Activated CD8-positive, alpha-beta T cell treated with anti-CD3 and anti-CD28 coated beads, Interleukin-2, amount 10 ng/mL, durations not matched to agents 7 days and 5 days (primary cell): ENCODE measurements at regions of chr5 and their contacts with region 1.

Region 1: DNA sequence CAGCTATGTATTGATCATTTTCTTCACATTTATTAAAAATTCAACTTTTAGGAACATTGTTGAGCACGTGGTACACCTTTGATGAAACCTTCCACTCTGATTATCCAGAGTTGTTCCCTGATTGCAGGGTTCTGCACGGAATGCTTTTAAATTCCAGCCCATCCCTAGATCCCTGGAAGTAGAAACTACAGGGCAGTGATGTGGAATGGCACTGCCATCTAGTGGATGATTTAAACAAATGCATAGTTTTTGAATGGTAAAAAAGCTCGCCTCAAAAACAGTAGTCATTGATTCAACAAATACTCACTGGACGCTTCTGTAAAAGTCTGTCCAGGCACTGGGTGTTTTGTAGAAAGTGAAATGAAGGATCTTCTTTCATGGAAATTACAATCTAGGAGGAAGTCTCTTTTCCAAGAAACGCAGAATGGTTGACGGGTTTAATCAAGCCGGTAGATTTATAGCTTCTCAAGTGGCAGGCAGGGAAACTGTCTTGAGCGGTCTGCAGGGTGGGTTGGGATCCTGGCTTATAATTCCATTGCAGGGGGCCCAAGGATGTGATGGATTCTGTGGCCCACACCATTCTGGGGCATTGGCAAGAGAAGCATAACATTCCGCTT is 118.4 kb downstream of the ARHGAP26 start:
- DNase-seq: peak; percentile 24
- ATAC-seq: no peak
- H3K4me3 Mint-ChIP-seq: no peak overlapping the region
- H3K27ac Mint-ChIP-seq: no peak overlapping the region
- H3K4me1 Mint-ChIP-seq: peaks cover 11% of the 10 kb centered on the region
- H3K27me3 Mint-ChIP-seq: no peaks in the 10 kb centered on the region

Region 2: GRCh38 chr5:142726188-142726731 is 162.3 kb before region 1 on chr5:
- CTCF ChIA-PET with region 1: interaction called, 468 read pairs
- POLR2A ChIA-PET with region 1: no interaction called
- DNase-seq: no peak
- ATAC-seq: no peak
- H3K4me3 Mint-ChIP-seq: no peak overlapping the region
- H3K27ac Mint-ChIP-seq: no peak overlapping the region
- H3K4me1 Mint-ChIP-seq: no peaks in the 10 kb centered on the region
- H3K27me3 Mint-ChIP-seq: peaks cover 2% of the 10 kb centered on the region

Region 3: GRCh38 chr5:142748568-142749249 is 139.9 kb before region 1 on chr5:
- CTCF ChIA-PET with region 1: interaction called, 445 read pairs
- POLR2A ChIA-PET with region 1: no interaction called
- DNase-seq: peak; percentile 62
- ATAC-seq: peak; percentile 65
- H3K4me3 Mint-ChIP-seq: no peak overlapping the region
- H3K27ac Mint-ChIP-seq: no peak overlapping the region
- H3K4me1 Mint-ChIP-seq: peaks cover 10% of the 10 kb centered on the region
- H3K27me3 Mint-ChIP-seq: peaks cover 4% of the 10 kb centered on the region

Region 4: DNA sequence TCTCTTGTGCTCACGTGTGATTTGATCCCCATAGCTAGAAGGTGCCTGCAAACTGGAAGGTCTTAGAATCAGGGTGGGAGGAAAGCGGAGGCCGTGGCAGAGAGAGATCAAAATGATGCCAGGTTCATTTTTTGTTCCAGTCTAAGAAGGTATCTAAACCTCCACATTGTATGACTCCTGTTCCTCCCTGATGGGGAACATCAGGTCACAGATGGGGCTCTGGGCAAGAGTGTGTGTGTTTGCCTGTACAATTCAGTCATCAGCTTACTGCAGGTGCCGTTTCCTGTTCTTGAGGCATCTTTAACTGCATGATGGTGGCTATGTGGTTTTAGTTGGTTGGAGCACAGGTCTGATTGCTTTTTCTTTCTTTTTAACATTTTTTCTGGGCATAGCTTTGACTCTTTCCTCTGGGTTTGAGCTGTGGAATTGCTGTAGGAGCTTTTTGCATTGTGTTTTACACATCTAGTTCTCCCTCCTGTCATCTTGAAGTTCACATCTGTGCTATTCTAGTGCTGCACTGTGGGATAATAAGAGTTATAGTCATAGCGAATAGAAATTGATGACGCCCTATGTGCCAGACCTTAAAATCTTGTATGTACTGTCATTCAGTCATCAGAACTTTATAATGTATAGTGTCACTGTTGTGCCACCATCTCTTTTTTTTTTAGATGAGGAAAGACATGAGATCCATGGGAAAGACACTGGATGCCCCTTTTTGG is 87.6 kb before region 1 on chr5:
- CTCF ChIA-PET with region 1: interaction called, 19 read pairs
- POLR2A ChIA-PET with region 1: no interaction called
- DNase-seq: peak; percentile 74
- ATAC-seq: peak; percentile 84
- H3K4me3 Mint-ChIP-seq: peak overlapping the region; percentile 68
- H3K27ac Mint-ChIP-seq: peak overlapping the region; percentile 93
- H3K4me1 Mint-ChIP-seq: peaks cover 67% of the 10 kb centered on the region
- H3K27me3 Mint-ChIP-seq: no peaks in the 10 kb centered on the region

Region 5: DNA sequence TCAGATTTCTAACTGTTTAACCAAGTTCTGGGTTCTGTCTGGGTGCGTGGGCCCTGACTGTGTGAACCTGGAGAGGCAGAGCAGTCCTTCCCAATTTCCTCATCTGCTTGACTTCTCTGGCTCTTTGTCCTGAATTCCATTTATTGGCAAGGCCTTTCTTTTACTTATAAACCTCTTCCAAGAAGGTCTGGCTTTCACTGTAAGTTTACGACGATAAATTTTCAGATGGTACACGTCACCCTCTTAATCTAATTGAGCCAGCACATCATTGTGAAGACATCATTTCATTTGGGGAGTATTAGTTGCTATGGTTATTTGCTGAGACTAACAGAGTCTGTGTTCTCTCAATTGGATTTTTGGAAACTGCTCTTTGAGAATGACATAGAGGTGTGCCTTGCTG is 26.0 kb before region 1 on chr5:
- CTCF ChIA-PET with region 1: interaction called, 13 read pairs
- POLR2A ChIA-PET with region 1: no interaction called
- DNase-seq: no peak
- ATAC-seq: no peak
- H3K4me3 Mint-ChIP-seq: no peak overlapping the region
- H3K27ac Mint-ChIP-seq: no peak overlapping the region
- H3K4me1 Mint-ChIP-seq: peaks cover 35% of the 10 kb centered on the region
- H3K27me3 Mint-ChIP-seq: no peaks in the 10 kb centered on the region

Region 6: DNA sequence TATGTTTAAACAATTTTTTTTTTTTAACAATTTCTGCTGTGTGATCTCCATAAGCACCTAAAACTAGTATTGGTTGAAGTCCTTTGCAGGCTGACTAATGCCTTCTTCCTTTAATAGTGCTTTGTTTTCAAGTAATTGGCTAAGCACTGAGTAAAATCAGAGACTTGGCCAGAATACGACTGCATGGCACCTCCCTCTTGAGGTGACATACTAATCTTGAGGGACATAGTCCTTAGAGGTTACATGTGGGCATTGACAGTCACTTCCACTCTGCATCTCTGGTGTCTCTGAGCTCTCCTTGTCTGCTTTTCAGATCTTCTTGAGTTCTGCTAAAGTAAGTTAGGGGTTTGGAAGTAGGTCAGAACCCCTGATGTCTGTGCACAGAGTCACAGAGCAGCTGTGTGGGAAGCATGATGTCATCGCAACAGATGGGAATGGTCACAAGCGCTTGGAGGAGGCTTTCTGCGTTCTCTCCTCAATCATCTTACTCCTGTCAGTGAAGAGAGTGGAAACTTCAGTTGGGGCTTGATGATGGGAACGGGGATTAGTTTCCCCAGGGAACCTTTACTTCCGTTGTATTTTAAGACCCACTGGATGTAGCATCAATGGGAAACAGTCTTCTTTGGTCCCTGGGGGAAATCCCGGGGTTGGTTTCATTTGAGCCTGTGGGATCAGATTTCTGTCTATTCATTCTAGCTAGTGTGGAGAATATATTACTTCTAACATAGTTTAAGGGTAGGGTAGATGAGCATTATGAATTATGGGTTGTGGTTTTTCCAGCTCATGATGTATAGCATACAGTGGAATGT is 18.5 kb after region 1 on chr5:
- CTCF ChIA-PET with region 1: interaction called, 16 read pairs
- POLR2A ChIA-PET with region 1: no interaction called
- DNase-seq: no peak
- ATAC-seq: no peak
- H3K4me3 Mint-ChIP-seq: no peak overlapping the region
- H3K27ac Mint-ChIP-seq: no peak overlapping the region
- H3K4me1 Mint-ChIP-seq: no peaks in the 10 kb centered on the region
- H3K27me3 Mint-ChIP-seq: no peaks in the 10 kb centered on the region